Left ventricle myocardium superior (tissue), 1 donor: ENCODE measurements at regions of chr1 and their contacts with region 1.

Region 1: DNA sequence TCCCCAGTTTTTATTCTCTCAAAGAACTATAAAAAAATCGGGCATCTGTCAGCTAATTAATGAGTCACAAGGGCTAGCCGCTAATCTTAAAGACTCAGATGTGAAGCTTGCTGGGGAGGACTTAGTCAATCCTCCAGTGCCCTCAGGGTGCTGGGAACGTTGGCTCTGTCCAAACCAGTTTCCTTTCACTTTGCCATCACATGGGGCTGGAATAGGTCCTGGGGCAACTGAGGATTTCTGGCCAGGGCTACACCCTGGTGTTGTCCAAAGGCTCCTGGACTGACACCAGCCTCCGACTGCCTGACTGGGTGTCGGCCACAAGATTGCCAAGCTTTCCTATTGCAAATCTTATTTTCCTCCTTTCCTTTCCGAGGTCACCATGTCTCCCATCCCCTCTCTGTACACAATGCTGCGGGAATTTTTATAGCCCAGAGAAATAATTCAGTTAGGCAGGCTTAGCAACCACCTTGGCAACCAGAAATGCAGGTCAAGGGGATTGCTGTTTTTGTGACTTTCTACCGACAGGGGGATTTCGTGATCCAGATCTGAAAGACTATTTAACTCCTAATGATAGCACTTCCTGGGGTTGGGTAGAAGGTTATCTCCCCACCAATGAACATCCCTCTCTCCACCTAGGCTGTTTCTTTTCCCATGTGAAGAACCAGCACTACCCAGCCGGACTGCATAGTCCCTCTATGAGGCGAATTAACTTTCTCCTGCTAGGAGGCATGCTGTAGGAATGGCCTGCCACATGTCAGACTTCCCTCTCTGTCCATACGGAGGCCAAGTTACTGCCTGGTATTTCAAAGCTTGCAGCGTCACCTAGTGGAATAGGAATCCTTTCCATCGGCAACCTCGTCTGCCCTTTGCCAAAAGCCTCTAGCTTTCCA is 29.9 kb upstream of the CTBS start:
- DNase-seq: peak; percentile 38
- ATAC-seq: peak; percentile 90

Region 2: GRCh38 chr1:84442256-84442655 is 161.9 kb before region 1 on chr1:
- intact Hi-C with region 1: loop called (anchors 10 kb)
- DNase-seq: no peak
- ATAC-seq: peak; percentile 76

Region 3: DNA sequence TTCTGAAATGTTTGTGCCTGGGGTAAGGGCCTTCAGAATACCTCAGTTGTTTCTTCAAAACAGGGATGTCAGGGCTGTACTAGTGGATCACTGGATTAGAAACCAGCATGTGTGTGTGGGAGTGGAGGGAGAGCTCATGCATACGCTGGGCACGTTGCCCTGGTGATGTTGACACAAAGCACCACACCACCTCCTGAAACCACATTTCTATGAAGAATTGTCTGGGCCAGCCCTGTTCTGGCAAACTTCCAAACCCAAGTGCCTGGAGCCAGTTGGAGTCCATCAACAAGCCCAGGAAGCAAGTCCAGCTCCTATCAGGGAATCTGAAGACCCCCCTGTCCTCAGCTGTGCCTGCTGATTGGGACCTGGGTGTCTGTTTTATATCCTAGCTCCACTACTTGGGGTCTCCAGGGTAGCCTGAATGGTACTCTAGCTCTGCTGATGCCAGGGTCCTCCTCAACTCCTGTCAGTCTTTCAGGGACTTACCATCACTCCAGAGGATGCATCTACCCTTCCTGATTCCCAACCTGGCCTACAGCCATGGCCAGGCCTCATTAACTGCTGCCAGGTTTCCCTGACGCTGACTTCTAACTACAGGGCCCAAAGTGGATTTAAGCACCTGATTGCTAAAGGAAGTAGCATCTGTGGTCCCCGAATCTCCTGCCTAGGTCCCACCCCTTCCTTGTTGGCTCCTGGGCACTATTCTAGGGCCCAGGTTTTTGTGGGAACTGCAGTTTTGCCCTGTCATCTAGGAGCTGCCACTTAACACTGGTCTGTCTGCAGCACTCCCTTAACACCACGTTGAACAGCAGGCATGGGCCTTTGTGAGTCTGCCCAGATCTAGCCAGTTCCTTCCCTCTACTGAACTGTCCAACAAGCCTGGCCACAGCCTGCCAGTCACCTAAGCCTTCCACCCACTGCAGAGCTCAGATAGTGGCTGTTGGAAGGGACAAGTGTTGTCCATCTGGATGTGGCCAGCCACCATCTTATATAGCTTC is 243.4 kb after region 1 on chr1:
- intact Hi-C with region 1: no loop called
- DNase-seq: peak; percentile 75
- ATAC-seq: peak; percentile 93